ENCODE measurements at regions of chr2 and their contacts with region 1.

Region 1: GRCh38 chr2:196160101-196160500 is 11.3 kb downstream of the STK17B start:
- DNase-seq: peak; percentile 91
- H3K4me3 ChIP-seq: peak overlapping the region; percentile 54
- H3K27ac ChIP-seq: peak overlapping the region; percentile 82
- H3K4me1 ChIP-seq: peaks cover 84% of the 10 kb centered on the region
- CTCF ChIP-seq: no peak

Region 2: DNA sequence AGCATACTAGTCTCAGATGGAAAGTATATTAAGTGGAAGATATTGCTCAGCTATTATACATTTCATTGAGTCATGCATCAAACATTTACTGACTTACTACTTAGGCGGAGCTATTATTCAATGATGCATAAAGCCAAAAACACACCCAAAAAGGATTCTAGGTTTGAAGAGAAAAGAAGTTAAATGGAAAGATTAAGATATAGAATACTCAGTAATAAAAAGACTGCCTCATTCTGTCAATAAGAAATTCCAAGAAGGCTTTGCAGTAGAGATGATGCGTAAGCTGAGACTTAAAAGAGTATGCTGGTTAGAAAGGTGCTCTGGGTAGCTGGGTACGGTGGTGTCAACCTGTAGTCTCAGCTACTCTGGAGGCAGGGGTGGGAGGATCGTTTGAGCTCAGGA is 16.4 kb before region 1 on chr2:
- CTCF ChIA-PET with region 1: no interaction called
- POLR2A ChIA-PET with region 1: interaction called, 11 read pairs
- intact Hi-C with region 1: loop called (anchors 2 kb)
- DNase-seq: no peak
- H3K4me3 ChIP-seq: no peak overlapping the region
- H3K27ac ChIP-seq: no peak overlapping the region
- H3K4me1 ChIP-seq: no peaks in the 10 kb centered on the region
- CTCF ChIP-seq: no peak

Measured in OCI-LY7 (cell line).